ENCODE measurements at regions of chr14 and their contacts with region 1.

Region 1: DNA sequence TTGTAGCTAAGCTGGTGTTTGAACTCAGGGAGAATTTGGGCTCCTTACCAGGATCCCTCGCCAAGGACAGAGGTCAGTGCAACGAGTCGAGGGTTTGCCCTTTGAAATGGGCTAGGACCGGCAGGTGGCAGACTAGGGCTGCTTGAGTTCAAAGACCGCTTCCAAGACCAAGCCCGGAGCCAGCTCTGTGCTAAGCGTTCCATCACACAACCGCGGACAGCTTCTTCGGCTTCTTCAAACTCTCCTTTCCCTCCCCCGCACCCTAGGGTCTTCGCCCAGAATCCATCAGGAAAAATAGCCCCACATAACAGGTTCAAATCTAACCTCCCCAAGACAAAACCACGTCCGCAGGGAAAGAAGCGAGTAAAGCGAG is 705 bp upstream of the FLVCR2 start:
- DNase-seq: peak; percentile 88 to 93 (median 92)
- ATAC-seq: peak; percentile 83 to 90 (median 86)
- H3K4me3 ChIP-seq: peak overlapping the region; percentile 63 to 94 (median 78)
- H3K27ac ChIP-seq: peak overlapping the region; percentile 73 to 91 (median 83)
- H3K4me1 ChIP-seq: peaks cover 0 to 27% (median 5%) of the 10 kb centered on the region in 4 donors
- H3K27me3 ChIP-seq: no peaks in the 10 kb centered on the region
- CTCF ChIP-seq: peak; percentile 68 to 82 (median 74)
- POLR2A ChIP-seq: no peak

Region 2: GRCh38 chr14:75383721-75384120 is 194.0 kb before region 1 on chr14:
- intact Hi-C with region 1: no loop called
- DNase-seq: no peak
- ATAC-seq: peak in 3 of 4 donors; percentile 32 to 53 (median 34)
- H3K4me3 ChIP-seq: no peak overlapping the region
- H3K27ac ChIP-seq: no peak overlapping the region
- H3K4me1 ChIP-seq: no peaks in the 10 kb centered on the region
- H3K27me3 ChIP-seq: no peaks in the 10 kb centered on the region
- CTCF ChIP-seq: no peak
- POLR2A ChIP-seq: no peak

Region 3: DNA sequence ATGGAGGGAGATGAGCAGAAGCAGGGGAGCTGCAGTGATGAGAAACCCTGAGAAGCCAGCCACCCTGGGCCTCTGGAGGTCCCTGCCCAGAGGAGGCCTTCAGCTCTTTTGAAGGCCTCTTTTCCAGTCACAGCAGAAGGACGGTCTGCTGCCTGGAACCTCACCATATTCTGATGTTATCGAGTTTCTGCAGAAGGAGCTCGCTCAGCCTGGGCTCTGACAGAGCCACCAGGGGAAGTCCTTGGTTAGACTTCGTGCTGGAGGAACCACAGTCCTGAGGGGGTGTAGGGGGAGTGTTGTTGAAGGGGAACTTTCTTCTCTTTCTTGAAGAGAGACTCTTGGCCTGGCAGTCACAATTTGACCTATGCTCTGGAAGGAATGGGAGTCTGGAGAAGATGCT is 80.5 kb before region 1 on chr14:
- intact Hi-C with region 1: no loop called
- DNase-seq: no peak
- ATAC-seq: peak in 1 of 4 donors; percentile 27
- H3K4me3 ChIP-seq: no peak overlapping the region
- H3K27ac ChIP-seq: no peak overlapping the region
- H3K4me1 ChIP-seq: no peaks in the 10 kb centered on the region
- H3K27me3 ChIP-seq: no peaks in the 10 kb centered on the region
- CTCF ChIP-seq: no peak
- POLR2A ChIP-seq: no peak

Region 4: DNA sequence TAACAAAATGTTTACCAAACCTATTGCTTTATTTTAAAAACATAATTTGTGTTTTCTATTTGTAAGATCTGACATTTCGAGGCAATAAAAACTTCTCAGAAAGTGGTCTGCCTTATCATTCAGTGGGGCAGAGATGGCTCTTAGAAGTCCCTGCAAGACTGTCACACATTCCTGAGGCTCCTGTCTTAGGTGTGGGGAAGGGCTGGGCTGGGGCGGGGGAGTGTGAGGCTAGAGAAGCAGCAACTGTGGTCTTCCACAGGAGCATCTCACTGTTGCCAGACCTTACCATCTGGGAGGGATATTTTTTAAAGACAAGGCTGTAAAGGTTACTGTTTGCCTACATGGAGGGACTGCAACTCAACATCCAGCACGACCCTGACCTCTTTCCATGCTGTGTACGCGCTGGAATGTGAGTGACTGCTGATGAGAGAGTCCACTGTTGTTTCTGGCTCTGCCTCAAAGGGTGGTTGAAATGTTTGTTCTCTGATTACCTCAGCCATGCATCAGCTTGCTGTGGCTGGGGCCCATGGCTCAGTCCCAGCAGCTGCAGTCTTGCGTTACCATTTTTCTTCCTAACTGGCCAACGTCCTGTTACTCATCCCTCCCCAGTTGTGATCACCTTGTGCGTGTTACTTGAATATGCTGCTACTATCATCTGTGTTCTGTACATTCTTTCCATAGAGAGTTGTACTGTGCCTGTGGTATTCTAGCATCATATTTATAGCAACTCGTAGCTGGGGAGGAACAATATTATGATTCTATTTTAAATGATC is 70.5 kb after region 1 on chr14:
- intact Hi-C with region 1: loop called in 1 of 2 experiments (anchors 5 kb)
- DNase-seq: peak; percentile 75 to 93 (median 87)
- ATAC-seq: peak; percentile 75 to 87 (median 84)
- H3K4me3 ChIP-seq: no peak overlapping the region
- H3K27ac ChIP-seq: peak overlapping the region; percentile 41 to 80 (median 78)
- H3K4me1 ChIP-seq: peaks cover 0 to 70% (median 32%) of the 10 kb centered on the region in 4 donors
- H3K27me3 ChIP-seq: no peaks in the 10 kb centered on the region
- CTCF ChIP-seq: no peak
- POLR2A ChIP-seq: peak; percentile 23

Region 5: GRCh38 chr14:75657331-75657730 is 79.6 kb after region 1 on chr14:
- intact Hi-C with region 1: loop called in 1 of 2 experiments (anchors 5 kb)
- DNase-seq: no peak
- ATAC-seq: no peak
- H3K4me3 ChIP-seq: no peak overlapping the region
- H3K27ac ChIP-seq: no peak overlapping the region
- H3K4me1 ChIP-seq: peaks cover 0 to 21% (median 9%) of the 10 kb centered on the region in 4 donors
- H3K27me3 ChIP-seq: no peaks in the 10 kb centered on the region
- CTCF ChIP-seq: no peak
- POLR2A ChIP-seq: no peak

Measured in right lobe of liver (tissue), 6 donors.